Keratinocyte (primary cell): ENCODE measurements at regions of chr12 and their contacts with region 1.

Region 1: GRCh38 chr12:99386907-99387306 is 260.6 kb upstream of the GARIN6 start:
- DNase-seq: peak; percentile 0
- H3K4me3 ChIP-seq: no peak overlapping the region
- H3K27ac ChIP-seq: no peak overlapping the region
- H3K4me1 ChIP-seq: no peaks in the 10 kb centered on the region
- H3K27me3 ChIP-seq: no peaks in the 10 kb centered on the region
- CTCF ChIP-seq: peak; percentile 54 to 65 (median 55)

Region 2: GRCh38 chr12:99068993-99069747 is 317.7 kb before region 1 on chr12:
- dilution Hi-C with region 1: no loop called
- DNase-seq: no peak
- H3K4me3 ChIP-seq: no peak overlapping the region
- H3K27ac ChIP-seq: no peak overlapping the region
- H3K4me1 ChIP-seq: no peaks in the 10 kb centered on the region
- H3K27me3 ChIP-seq: no peaks in the 10 kb centered on the region
- CTCF ChIP-seq: no peak

Region 3: GRCh38 chr12:99436584-99436983 is 49.7 kb after region 1 on chr12:
- dilution Hi-C with region 1: no loop called
- DNase-seq: no peak
- H3K4me3 ChIP-seq: no peak overlapping the region
- H3K27ac ChIP-seq: no peak overlapping the region
- H3K4me1 ChIP-seq: no peaks in the 10 kb centered on the region
- H3K27me3 ChIP-seq: no peaks in the 10 kb centered on the region
- CTCF ChIP-seq: no peak

Region 4: DNA sequence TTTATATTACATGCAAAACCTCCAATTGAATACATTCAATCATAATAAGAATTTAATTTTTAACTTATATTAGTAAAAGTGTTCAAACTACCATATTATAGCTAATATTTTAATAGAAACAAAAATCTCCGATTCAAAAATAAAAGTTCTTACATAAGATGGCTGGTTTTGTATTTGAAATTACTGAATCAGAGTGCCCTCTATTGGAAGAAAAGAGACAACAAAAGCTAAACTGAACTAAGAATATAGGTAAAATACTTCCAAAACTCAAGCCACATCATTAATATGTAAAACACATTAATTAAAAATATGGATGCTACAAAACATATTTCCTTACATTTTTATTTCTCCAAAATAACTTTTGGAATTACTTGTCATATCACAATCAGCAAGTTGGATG is 380.9 kb after region 1 on chr12:
- dilution Hi-C with region 1: loop called (anchors 25 kb)
- DNase-seq: no peak
- H3K4me3 ChIP-seq: no peak overlapping the region
- H3K27ac ChIP-seq: no peak overlapping the region
- H3K4me1 ChIP-seq: peaks cover 4% of the 10 kb centered on the region
- H3K27me3 ChIP-seq: no peaks in the 10 kb centered on the region
- CTCF ChIP-seq: peak in 1 of 3 experiments; percentile 30